ENCODE measurements at regions of chr18 and their contacts with region 1.

Region 1: DNA sequence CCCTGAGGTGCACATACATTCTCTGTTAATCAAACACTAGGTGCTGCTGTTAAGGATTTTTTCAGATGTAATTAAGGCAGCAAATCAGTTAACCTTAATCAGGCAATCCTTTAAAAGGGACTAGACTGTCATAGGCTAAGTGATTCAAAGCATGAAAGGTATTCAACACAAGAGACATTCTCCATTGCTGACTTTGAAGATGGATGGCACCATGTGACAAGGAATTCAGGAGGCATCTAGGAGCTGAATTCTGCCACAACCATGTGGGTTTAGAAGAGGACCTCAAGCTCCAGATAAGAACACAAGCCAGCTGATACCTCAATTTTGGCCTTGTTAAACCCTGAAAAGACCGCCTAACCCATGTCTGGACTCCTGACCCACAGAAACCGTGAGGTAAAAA is 84.0 kb downstream of the SMAD2 start:
- DNase-seq: no peak
- H3K4me3 Mint-ChIP-seq: no peak overlapping the region
- H3K27ac Mint-ChIP-seq: no peak overlapping the region
- H3K4me1 Mint-ChIP-seq: no peaks in the 10 kb centered on the region
- H3K27me3 Mint-ChIP-seq: no peaks in the 10 kb centered on the region

Region 2: DNA sequence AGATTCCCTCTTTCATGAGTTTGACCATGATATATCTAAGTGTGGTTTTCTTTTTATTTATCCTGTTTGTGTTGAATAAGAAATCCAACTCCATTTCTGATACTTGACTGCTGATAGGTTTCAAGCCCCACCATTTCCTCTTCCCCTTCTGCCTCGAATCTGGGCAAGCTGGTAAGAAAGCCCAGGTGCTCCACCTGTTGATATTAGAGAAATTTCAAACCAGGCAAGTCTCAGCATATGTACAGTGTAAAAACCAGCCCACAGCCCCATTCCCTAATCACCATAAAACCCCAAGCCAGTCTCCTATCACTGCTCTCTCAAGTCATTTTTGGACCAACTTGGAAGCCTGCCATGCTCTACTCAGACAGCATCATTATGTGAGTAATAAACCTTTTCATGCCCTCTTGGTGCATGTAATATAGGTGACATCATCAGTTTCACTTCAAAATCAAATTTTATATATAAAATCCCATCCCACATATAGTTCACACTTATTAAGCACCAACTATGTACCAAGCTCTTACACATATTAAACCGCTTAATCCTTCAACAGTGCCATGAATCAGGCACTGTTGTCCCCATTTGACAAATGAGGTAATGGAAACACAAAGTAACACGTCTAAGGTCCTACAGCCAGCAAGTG is 37.5 kb after region 1 on chr18:
- intact Hi-C with region 1: loop called (anchors 5 kb)
- DNase-seq: no peak
- H3K4me3 Mint-ChIP-seq: no peak overlapping the region
- H3K27ac Mint-ChIP-seq: peak overlapping the region; percentile 63
- H3K4me1 Mint-ChIP-seq: peaks cover 51% of the 10 kb centered on the region
- H3K27me3 Mint-ChIP-seq: no peaks in the 10 kb centered on the region

Region 3: GRCh38 chr18:48059455-48060010 is 213.1 kb after region 1 on chr18:
- intact Hi-C with region 1: no loop called
- DNase-seq: no peak
- H3K4me3 Mint-ChIP-seq: no peak overlapping the region
- H3K27ac Mint-ChIP-seq: no peak overlapping the region
- H3K4me1 Mint-ChIP-seq: no peaks in the 10 kb centered on the region
- H3K27me3 Mint-ChIP-seq: peaks cover 34% of the 10 kb centered on the region